Kidney (tissue), 22 donors: ENCODE measurements at regions of chr14 and their contacts with region 1.

Region 1: GRCh38 chr14:29536886-29537511 is 390.6 kb downstream of the PRKD1 start:
- DNase-seq: peak in 2 of 5 donors; percentile 12 to 14
- H3K4me3 ChIP-seq: no peak overlapping the region
- H3K27ac ChIP-seq: no peak overlapping the region
- H3K4me1 ChIP-seq: no peaks in the 10 kb centered on the region
- H3K27me3 ChIP-seq: no peaks in the 10 kb centered on the region
- CTCF ChIP-seq: peak; percentile 25

Region 2: GRCh38 chr14:28751467-28752058 is 785.4 kb before region 1 on chr14:
- intact Hi-C with region 1: loop called (anchors 10 kb)
- DNase-seq: peak in 3 of 5 donors; percentile 56 to 79 (median 70)
- H3K4me3 ChIP-seq: no peak overlapping the region
- H3K27ac ChIP-seq: no peak overlapping the region
- H3K4me1 ChIP-seq: no peaks in the 10 kb centered on the region
- H3K27me3 ChIP-seq: peaks cover 21% of the 10 kb centered on the region
- CTCF ChIP-seq: peak; percentile 58

Region 3: GRCh38 chr14:29470043-29470442 is 67.0 kb before region 1 on chr14:
- intact Hi-C with region 1: no loop called
- DNase-seq: no peak
- H3K4me3 ChIP-seq: no peak overlapping the region
- H3K27ac ChIP-seq: no peak overlapping the region
- H3K4me1 ChIP-seq: no peaks in the 10 kb centered on the region
- H3K27me3 ChIP-seq: no peaks in the 10 kb centered on the region
- CTCF ChIP-seq: no peak

Region 4: DNA sequence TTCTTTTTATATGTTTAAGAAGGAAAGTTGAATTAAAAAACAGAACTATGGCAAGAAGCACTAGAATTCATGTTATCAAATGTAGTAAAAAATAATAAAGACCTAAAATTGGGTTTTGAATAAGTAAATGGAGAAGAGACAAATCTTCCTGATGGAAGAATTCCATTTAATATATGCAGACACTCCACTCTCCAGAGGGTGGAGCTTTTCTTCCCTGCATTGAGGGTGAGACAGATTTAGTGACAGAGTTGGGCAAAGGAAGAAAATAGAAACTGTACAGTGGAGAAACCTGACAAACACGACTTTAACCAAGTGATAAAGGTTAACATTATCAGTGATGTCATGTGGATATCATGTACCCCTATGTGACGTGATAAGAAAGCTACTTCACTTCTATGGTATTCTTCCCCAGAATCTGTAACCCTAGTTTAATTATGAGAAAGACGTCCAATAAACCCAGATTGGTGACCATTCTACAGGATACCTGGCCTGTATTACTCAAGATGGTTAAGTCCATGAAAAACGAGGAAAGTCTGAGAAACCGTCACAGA is 173.1 kb after region 1 on chr14:
- intact Hi-C with region 1: no loop called
- DNase-seq: peak in 1 of 5 donors; percentile 19
- H3K4me3 ChIP-seq: no peak overlapping the region
- H3K27ac ChIP-seq: no peak overlapping the region
- H3K4me1 ChIP-seq: no peaks in the 10 kb centered on the region
- H3K27me3 ChIP-seq: no peaks in the 10 kb centered on the region
- CTCF ChIP-seq: no peak